HCT116 (cell line): ENCODE measurements at regions of chr15 and their contacts with region 1.

Region 1: DNA sequence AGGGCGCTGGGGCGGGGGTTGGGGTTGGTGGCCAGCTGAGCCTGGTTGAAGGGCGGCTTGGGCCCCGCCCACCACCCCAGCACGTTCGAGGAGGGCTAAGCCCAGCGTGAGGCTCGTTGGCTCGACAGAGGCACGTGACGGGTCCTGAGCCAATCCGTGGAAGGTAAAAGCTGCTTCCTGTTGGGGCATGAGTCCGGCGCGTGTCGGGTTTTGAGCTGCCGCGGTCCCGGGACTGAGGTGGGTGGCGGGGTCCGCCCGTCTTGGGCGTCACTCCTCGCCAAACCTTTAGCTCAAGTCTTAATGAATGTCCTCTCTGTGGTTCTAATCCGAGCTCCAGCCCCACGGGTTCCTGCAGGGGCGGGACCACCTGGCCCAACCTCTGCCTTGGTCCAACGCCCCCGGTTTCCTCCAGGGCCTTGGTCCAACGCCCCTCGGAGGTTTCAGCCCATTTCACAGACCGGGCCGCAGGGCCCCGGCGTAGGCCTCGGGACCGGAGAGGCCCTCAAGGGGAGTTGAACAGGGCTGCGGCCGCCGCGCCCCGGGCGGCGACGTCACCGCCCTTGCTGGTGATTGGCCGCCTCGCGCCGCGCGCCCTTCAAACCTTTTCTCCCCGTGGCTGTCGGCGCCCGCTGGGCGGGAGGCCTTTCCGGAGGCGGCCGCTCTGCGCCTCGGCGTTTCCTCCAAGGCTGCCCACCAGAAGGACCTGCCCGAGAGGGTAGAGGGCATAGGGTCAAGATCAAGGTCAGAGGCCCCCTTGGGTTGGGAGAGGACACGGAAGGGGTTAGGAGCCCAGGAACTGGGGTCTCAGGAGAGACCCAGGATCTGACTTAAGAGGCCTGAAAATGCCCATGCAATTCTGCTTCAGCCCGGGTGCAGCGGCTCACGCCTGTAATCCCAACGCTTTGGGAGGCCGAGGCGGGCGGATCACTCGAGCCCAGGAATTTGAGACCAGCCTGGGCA is at the start of gene RCCD1:
- DNase-seq: peak; percentile 92
- ATAC-seq: peak; percentile 93
- H3K4me3 ChIP-seq: peak within 1 kb of the TSS; percentile 71 to 75
- H3K27ac ChIP-seq: peak within 1 kb of the TSS; percentile 97
- H3K4me1 ChIP-seq: peaks cover 11 to 23% of the 10 kb centered on the region in 2 experiments
- H3K27me3 ChIP-seq: no peaks in the 10 kb centered on the region
- CTCF ChIP-seq: no peak
- POLR2A ChIP-seq: peak; percentile 84
- RAD21 ChIP-seq: no peak
- total RNA-seq, gene RCCD1: 38.5 TPM

Region 2: DNA sequence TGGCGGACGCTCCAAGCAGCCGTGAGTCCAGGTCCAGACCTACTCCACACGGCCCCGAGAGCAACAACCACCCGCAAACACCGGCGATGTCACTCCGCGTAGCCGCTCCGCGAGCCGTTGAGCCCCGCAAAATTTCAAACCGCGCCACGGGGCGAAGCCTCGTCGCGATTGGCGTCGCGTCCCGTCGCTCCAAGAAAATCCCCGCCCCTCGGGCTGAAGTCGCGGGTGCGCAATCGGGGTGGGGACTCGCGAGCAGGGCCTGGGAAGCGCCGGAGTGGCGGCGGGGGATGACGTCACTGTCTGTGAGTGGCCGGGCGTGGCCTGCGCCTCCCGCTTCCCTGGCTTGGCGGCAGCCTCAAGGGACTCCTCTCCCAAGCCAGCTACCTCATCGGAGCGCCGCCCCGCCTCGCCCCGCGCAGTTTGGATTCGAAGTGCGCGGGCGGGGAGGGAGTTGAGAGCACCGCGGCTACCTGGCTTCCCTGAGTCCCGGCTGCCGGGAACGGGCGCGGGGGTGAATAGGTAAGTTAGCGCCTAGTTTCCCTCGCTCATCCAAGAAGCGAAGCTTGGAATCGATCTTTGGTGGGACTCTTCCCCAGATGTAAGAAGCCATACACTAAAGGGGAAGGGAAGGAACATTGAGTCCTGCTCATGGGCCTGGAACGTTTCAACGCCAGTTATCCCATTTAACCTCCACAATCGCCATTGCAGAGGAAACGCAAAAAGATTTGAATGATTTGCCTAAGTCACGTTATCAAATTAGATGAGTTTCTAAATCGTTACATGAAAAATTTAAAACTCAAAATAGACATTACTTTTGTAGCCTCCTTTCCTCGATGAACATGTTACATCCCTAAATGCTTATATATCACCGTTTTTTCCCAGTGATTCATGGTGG is 39.7 kb after region 1 on chr15 and contains the start of gene PRC1:
- CTCF ChIA-PET with region 1: no interaction called
- POLR2A ChIA-PET with region 1: no interaction called
- RAD21 ChIA-PET with region 1: no interaction called
- intact Hi-C with region 1: loop called (anchors 1 kb)
- DNase-seq: peak; percentile 94
- ATAC-seq: peak; percentile 97
- H3K4me3 ChIP-seq: peak within 1 kb of the TSS; percentile 84 to 89
- H3K27ac ChIP-seq: peak within 1 kb of the TSS; percentile 91
- H3K4me1 ChIP-seq: peaks cover 7 to 19% of the 10 kb centered on the region in 2 experiments
- H3K27me3 ChIP-seq: no peaks in the 10 kb centered on the region
- CTCF ChIP-seq: no peak
- POLR2A ChIP-seq: peak; percentile 51
- RAD21 ChIP-seq: no peak
- total RNA-seq, gene PRC1: 186 TPM

Region 3: GRCh38 chr15:91032919-91033803 is 78.2 kb after region 1 on chr15:
- CTCF ChIA-PET with region 1: interaction called, 8 read pairs
- POLR2A ChIA-PET with region 1: interaction called, 3 read pairs
- RAD21 ChIA-PET with region 1: interaction called in 1 of 2 experiments, 3 read pairs
- intact Hi-C with region 1: loop called (anchors 1 kb)
- DNase-seq: peak; percentile 83
- ATAC-seq: peak; percentile 97
- H3K4me3 ChIP-seq: no peak overlapping the region
- H3K27ac ChIP-seq: no peak overlapping the region
- H3K4me1 ChIP-seq: peaks cover 0 to 9% of the 10 kb centered on the region in 2 experiments; a peak in 1 of 4 replicates
- H3K27me3 ChIP-seq: no peaks in the 10 kb centered on the region
- CTCF ChIP-seq: peak; percentile 76 to 97 (median 92)
- POLR2A ChIP-seq: no peak
- RAD21 ChIP-seq: peak; percentile 80